B cell (primary cell): ENCODE measurements at regions of chr14 and their contacts with region 1.

Region 1: GRCh38 chr14:75258615-75259466 is 19.8 kb upstream of the FOS start:
- DNase-seq: peak; percentile 100
- ATAC-seq: peak; percentile 86
- H3K4me3 ChIP-seq: peak overlapping the region; percentile 60 to 72 (median 67)
- H3K4me3 Mint-ChIP-seq: peak overlapping the region; percentile 98
- H3K27ac ChIP-seq: peak overlapping the region; percentile 97 to 99
- H3K27ac Mint-ChIP-seq: peak overlapping the region; percentile 100
- H3K4me1 ChIP-seq: peaks cover 14 to 18% of the 10 kb centered on the region in 2 donors
- H3K4me1 Mint-ChIP-seq: peaks cover 29% of the 10 kb centered on the region
- H3K27me3 ChIP-seq: no peaks in the 10 kb centered on the region
- H3K27me3 Mint-ChIP-seq: peaks cover 3% of the 10 kb centered on the region
- CTCF ChIP-seq: no peak

Region 2: DNA sequence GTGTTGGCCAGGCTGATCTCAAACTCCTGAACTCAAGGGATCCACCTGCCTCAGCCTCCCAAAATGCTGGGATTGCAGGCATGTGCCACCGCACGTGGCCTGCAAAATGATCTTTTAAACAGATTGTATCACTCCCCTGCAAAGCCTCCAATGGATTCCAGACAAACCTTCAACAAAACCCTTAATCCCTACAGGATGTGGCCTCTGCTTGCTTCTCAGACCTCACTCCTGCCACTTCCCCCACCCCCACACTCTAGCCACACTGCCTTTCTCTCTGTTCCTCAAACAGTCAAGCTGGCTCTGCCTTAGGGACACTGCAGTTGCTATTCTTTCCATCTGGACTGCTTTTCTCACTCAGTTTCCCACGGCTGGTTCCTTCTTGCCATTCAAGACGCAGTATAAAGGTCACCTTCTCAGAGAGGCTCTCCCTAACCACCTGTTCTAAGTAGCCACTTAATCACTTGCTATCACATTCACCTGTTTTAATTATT is 35.1 kb before region 1 on chr14:
- CTCF ChIA-PET with region 1: no interaction called
- POLR2A ChIA-PET with region 1: no interaction called
- intact Hi-C with region 1: loop called (anchors 5 kb)
- DNase-seq: peak; percentile 64
- ATAC-seq: peak; percentile 54
- H3K4me3 ChIP-seq: no peak overlapping the region
- H3K4me3 Mint-ChIP-seq: peak overlapping the region; percentile 35
- H3K27ac ChIP-seq: no peak overlapping the region
- H3K27ac Mint-ChIP-seq: peak overlapping the region; percentile 12
- H3K4me1 ChIP-seq: peaks cover 34 to 45% of the 10 kb centered on the region in 2 donors
- H3K4me1 Mint-ChIP-seq: peaks cover 39% of the 10 kb centered on the region
- H3K27me3 ChIP-seq: no peaks in the 10 kb centered on the region
- H3K27me3 Mint-ChIP-seq: no peaks in the 10 kb centered on the region
- CTCF ChIP-seq: no peak

Region 3: GRCh38 chr14:75278422-75279161 is 19.8 kb after region 1 on chr14 and contains the start of gene FOS:
- CTCF ChIA-PET with region 1: interaction called, 7 read pairs
- POLR2A ChIA-PET with region 1: interaction called, 12 read pairs
- intact Hi-C with region 1: loop called (anchors 1 kb)
- DNase-seq: peak; percentile 99
- ATAC-seq: peak; percentile 63
- H3K4me3 ChIP-seq: peak within 1 kb of the TSS; percentile 61 to 100 (median 95)
- H3K4me3 Mint-ChIP-seq: peak within 1 kb of the TSS; percentile 99
- H3K27ac ChIP-seq: peak within 1 kb of the TSS; percentile 50 to 93
- H3K27ac Mint-ChIP-seq: peak within 1 kb of the TSS; percentile 96
- H3K4me1 ChIP-seq: peaks cover 56 to 58% of the 10 kb centered on the region in 2 donors
- H3K4me1 Mint-ChIP-seq: peaks cover 65% of the 10 kb centered on the region
- H3K27me3 ChIP-seq: peaks cover 0 to 52% (median 28%) of the 10 kb centered on the region in 4 experiments
- H3K27me3 Mint-ChIP-seq: peaks cover 38% of the 10 kb centered on the region
- CTCF ChIP-seq: no peak
- total RNA-seq, gene FOS: 103 and 104 TPM in 2 replicates